ENCODE measurements at regions of chr6 and their contacts with region 1.

Region 1: GRCh38 chr6:170516783-170517616 is 36.1 kb downstream of the PSMB1 start:
- DNase-seq: peak; percentile 63
- ATAC-seq: peak; percentile 83
- H3K4me3 ChIP-seq: peak overlapping the region; percentile 25; the same call in 1 of the 2 replicates
- H3K27ac ChIP-seq: no peak overlapping the region
- H3K4me1 ChIP-seq: no peaks in the 10 kb centered on the region; the same call in 1 of the 2 replicates
- H3K27me3 ChIP-seq: peaks cover 15% of the 10 kb centered on the region; the same call in 1 of the 2 replicates
- CTCF ChIP-seq: peak; percentile 76

Region 2: DNA sequence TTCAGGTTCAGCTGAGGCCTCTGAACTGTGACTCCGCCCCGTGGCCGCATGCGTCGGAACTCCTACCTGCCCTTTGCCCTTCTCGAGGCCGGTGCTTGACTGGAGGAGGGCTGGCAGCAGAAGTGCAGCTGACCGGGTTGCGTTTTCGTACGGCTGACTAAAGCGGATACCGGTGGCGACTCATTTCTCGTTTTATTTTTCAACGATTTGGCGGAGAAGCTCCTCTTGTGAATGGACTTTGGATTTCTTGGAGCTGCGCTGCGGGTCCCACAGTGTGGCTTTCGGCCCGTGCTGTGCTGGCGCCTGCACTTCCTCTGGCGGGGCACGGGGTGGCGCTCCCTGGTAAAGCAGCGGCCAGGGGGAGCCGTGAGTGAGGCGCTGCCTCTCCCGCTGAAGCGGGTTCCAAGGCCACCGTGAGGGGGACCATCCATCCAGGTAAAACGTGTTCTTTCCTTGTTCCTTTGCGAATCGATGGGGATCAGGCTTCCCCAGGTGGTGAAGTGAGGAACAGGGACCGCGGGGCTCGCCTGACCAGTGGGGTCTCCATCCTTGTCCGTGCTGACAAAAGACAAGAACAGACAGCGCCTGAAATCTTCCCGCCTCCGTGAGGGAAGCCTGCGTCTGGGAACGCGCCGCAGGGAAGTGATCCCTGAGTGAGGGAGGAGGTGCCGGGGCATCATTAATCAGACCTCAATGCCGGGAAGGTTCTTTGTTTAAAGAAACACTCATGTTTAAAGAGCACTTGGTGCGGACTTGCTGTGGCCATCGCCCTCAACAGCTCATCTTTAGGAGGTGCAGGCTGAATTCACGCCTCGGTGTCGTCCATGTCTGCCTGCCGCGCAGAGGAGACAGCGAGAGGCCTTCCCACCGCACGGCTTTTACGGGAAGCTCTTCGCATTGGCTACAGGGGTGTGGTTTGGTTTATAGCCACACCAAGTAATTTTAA is 726.7 kb before region 1 on chr6:
- CTCF ChIA-PET with region 1: no interaction called
- POLR2A ChIA-PET with region 1: no interaction called
- intact Hi-C with region 1: loop called (anchors 5 kb)
- DNase-seq: peak; percentile 65
- ATAC-seq: peak; percentile 96
- H3K4me3 ChIP-seq: peak overlapping the region; percentile 75
- H3K27ac ChIP-seq: no peak overlapping the region
- H3K4me1 ChIP-seq: peaks cover 14% of the 10 kb centered on the region; the same call in 1 of the 2 replicates
- H3K27me3 ChIP-seq: no peaks in the 10 kb centered on the region
- CTCF ChIP-seq: peak; percentile 89

Region 3: GRCh38 chr6:169831450-169832246 is 685.4 kb before region 1 on chr6:
- CTCF ChIA-PET with region 1: no interaction called
- POLR2A ChIA-PET with region 1: no interaction called
- intact Hi-C with region 1: loop called (anchors 5 kb)
- DNase-seq: peak; percentile 71
- ATAC-seq: peak; percentile 95
- H3K4me3 ChIP-seq: peak overlapping the region; percentile 39
- H3K27ac ChIP-seq: no peak overlapping the region
- H3K4me1 ChIP-seq: peaks cover 13% of the 10 kb centered on the region; the same call in 1 of the 2 replicates
- H3K27me3 ChIP-seq: peaks cover 6% of the 10 kb centered on the region; the same call in 1 of the 2 replicates
- CTCF ChIP-seq: peak; percentile 88

Region 4: DNA sequence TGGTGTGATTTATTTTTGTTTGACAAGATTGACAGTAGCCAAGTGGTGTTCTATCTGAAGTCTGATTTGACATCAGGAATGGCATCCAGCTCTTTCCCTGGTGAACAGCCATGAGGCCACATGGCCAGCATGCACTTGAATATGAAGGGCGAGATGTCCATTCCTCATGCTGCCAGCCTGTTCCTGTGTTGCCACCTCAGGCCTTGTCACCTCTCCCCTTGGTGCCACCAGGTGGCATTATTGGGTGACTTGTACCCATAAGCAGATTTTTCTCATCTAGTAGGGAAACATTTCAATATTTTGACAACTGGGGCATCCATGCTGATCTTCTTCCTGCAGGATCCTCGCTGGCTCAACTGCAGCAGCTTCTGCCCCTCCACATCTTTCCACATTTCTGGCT is 566.4 kb before region 1 on chr6:
- CTCF ChIA-PET with region 1: no interaction called
- POLR2A ChIA-PET with region 1: no interaction called
- intact Hi-C with region 1: loop called (anchors 5 kb)
- DNase-seq: peak; percentile 38
- ATAC-seq: no peak
- H3K4me3 ChIP-seq: no peak overlapping the region
- H3K27ac ChIP-seq: no peak overlapping the region
- H3K4me1 ChIP-seq: no peaks in the 10 kb centered on the region
- H3K27me3 ChIP-seq: no peaks in the 10 kb centered on the region
- CTCF ChIP-seq: peak; percentile 51

Region 5: GRCh38 chr6:170429450-170429849 is 87.5 kb before region 1 on chr6:
- CTCF ChIA-PET with region 1: no interaction called
- POLR2A ChIA-PET with region 1: no interaction called
- intact Hi-C with region 1: loop called (anchors 5 kb)
- DNase-seq: no peak
- ATAC-seq: no peak
- H3K4me3 ChIP-seq: no peak overlapping the region
- H3K27ac ChIP-seq: no peak overlapping the region
- H3K4me1 ChIP-seq: no peaks in the 10 kb centered on the region
- H3K27me3 ChIP-seq: no peaks in the 10 kb centered on the region
- CTCF ChIP-seq: no peak